Aorta (tissue), 5 donors: ENCODE measurements at regions of chr2 and their contacts with region 1.

Region 1: GRCh38 chr2:47373747-47374146 is 29.2 kb upstream of the MSH2 start:
- DNase-seq: no peak
- ATAC-seq: no peak
- H3K4me3 ChIP-seq: no peak overlapping the region
- H3K27ac ChIP-seq: no peak overlapping the region
- H3K4me1 ChIP-seq: no peaks in the 10 kb centered on the region
- H3K27me3 ChIP-seq: no peaks in the 10 kb centered on the region

Region 2: DNA sequence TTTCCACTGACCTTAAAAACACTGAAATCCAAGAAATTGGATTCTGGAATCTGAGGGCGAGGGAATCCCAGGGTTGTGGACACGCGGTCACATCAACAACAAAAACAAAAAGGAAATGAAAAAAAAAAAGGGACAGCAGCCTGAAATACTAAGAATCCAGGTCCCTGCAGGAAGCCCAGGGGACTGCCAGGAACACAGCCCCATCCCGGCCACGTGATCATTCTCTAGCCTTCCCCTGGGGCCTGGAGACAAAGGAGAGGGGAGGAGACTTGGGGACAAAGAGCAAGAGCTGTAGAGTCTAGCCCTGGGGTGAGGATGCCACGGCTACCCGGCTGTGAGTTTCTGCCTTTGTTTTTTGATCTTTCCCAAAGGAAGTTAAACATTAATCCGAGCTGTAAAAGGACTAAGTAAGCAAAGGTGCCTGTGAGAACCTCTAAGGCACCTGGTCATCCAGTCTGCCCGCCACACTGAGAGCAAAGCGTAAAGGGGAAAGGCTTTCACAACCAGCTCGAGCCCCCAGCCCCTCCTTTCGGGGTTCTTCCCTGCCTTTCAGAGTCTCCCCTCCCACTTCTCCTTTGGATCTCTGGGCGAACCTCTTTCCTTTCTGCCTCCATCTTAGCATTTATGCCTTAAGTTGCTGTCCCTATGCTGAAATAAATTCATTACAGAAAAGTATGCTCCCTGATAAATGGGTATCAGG is 28.7 kb before region 1 on chr2:
- intact Hi-C with region 1: loop called in 1 of 2 experiments (anchors 2 kb)
- DNase-seq: peak in 1 of 2 donors; percentile 65
- ATAC-seq: peak; percentile 83
- H3K4me3 ChIP-seq: no peak overlapping the region
- H3K27ac ChIP-seq: no peak overlapping the region
- H3K4me1 ChIP-seq: no peaks in the 10 kb centered on the region
- H3K27me3 ChIP-seq: no peaks in the 10 kb centered on the region

Region 3: GRCh38 chr2:47599171-47599570 is 225.4 kb after region 1 on chr2:
- intact Hi-C with region 1: no loop called
- DNase-seq: no peak
- ATAC-seq: no peak
- H3K4me3 ChIP-seq: no peak overlapping the region
- H3K27ac ChIP-seq: no peak overlapping the region
- H3K4me1 ChIP-seq: no peaks in the 10 kb centered on the region
- H3K27me3 ChIP-seq: no peaks in the 10 kb centered on the region